Pancreas (tissue), 10 donors: ENCODE measurements at regions of chr4 and their contacts with region 1.

Region 1: GRCh38 chr4:47669946-47670345 is 167.9 kb downstream of the CORIN start:
- DNase-seq: peak in 3 of 6 donors; percentile 13 to 35 (median 24)
- ATAC-seq: peak; percentile 83 to 89 (median 88)
- H3K4me3 ChIP-seq: no peak overlapping the region
- H3K27ac ChIP-seq: no peak overlapping the region
- H3K4me1 ChIP-seq: no peaks in the 10 kb centered on the region
- H3K27me3 ChIP-seq: no peaks in the 10 kb centered on the region
- CTCF ChIP-seq: no peak

Region 2: DNA sequence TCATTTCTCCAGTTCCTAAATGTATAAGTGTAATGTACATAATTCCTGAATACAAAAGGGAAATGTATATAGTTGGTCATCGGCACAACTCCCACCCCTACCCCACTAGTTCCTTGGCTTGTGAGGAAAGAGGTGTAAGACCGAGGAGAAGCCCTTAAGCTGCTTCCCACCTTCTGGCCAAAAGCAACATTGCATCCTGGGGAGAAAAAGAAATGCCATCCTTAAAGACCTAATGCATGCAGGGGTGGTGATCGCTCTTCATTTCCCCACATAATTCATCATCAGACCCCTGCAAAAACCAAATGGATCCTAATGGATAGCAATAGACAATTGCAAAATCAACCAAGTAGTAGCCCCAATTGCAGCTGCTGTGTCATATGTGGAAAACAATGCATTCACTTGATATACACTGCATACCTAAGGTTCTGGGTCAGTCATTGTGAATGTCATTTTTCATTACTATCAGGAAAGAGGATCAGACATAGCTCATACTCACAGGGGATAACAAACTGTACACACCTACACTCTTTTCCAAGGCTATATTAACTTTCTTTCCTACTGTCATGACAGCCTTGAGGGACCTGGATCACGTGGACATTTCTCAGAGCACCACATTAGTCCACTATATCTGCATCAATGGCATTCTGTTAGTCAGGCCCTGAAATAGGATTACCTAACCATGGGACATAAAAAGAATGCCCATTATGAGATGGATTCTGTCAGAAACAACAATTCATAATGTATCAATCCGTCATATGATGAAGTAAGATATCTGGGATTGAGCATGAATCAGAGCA is 276.2 kb after region 1 on chr4:
- intact Hi-C with region 1: loop called in 1 of 3 experiments (anchors 10 kb)
- DNase-seq: no peak
- ATAC-seq: no peak
- H3K4me3 ChIP-seq: no peak overlapping the region
- H3K27ac ChIP-seq: no peak overlapping the region
- H3K4me1 ChIP-seq: no peaks in the 10 kb centered on the region
- H3K27me3 ChIP-seq: no peaks in the 10 kb centered on the region
- CTCF ChIP-seq: no peak

Region 3: DNA sequence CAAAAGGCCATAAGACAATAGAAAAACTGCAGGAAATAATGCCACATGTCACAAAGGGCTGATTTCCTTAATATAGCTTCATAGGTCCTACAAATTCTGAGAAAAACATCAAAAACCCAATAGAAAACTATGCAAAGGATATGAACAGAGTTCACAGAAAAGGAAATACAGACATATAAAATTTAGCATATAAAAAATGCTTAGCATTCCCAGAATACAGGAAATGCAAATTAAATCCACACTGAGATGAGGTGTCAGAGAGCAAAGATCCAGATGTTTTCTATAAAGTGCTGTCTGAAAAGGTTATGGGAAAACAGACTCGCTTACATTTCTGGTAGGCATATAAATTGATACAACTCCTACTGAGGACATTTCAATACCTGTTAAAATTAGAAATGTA is 430.3 kb after region 1 on chr4:
- intact Hi-C with region 1: no loop called
- DNase-seq: no peak
- ATAC-seq: no peak
- H3K4me3 ChIP-seq: no peak overlapping the region
- H3K27ac ChIP-seq: no peak overlapping the region
- H3K4me1 ChIP-seq: no peaks in the 10 kb centered on the region
- H3K27me3 ChIP-seq: no peaks in the 10 kb centered on the region
- CTCF ChIP-seq: no peak